GM12878 (cell line): ENCODE measurements at regions of chr16 and their contacts with region 1.

Region 1: GRCh38 chr16:86751076-86752030 is 173.0 kb downstream of the FOXL1 start:
- DNase-seq: no peak
- ATAC-seq: no peak
- H3K4me3 ChIP-seq: no peak overlapping the region
- H3K27ac ChIP-seq: no peak overlapping the region
- H3K4me1 ChIP-seq: no peaks in the 10 kb centered on the region
- H3K27me3 ChIP-seq: no peaks in the 10 kb centered on the region
- CTCF ChIP-seq: no peak
- EP300 ChIP-seq: no peak
- POLR2A ChIP-seq: no peak
- RAD21 ChIP-seq: no peak

Region 2: GRCh38 chr16:86722970-86723369 is 28.4 kb before region 1 on chr16:
- CTCF ChIA-PET with region 1: no interaction called
- POLR2A ChIA-PET with region 1: no interaction called
- RAD21 ChIA-PET with region 1: no interaction called
- SMC1A ChIA-PET with region 1: no interaction called
- in situ Hi-C with region 1: no loop called
- intact Hi-C with region 1: no loop called
- DNase-seq: no peak
- ATAC-seq: no peak
- H3K4me3 ChIP-seq: no peak overlapping the region
- H3K27ac ChIP-seq: no peak overlapping the region
- H3K4me1 ChIP-seq: no peaks in the 10 kb centered on the region
- H3K27me3 ChIP-seq: no peaks in the 10 kb centered on the region
- CTCF ChIP-seq: no peak
- EP300 ChIP-seq: no peak
- POLR2A ChIP-seq: no peak
- RAD21 ChIP-seq: no peak

Region 3: DNA sequence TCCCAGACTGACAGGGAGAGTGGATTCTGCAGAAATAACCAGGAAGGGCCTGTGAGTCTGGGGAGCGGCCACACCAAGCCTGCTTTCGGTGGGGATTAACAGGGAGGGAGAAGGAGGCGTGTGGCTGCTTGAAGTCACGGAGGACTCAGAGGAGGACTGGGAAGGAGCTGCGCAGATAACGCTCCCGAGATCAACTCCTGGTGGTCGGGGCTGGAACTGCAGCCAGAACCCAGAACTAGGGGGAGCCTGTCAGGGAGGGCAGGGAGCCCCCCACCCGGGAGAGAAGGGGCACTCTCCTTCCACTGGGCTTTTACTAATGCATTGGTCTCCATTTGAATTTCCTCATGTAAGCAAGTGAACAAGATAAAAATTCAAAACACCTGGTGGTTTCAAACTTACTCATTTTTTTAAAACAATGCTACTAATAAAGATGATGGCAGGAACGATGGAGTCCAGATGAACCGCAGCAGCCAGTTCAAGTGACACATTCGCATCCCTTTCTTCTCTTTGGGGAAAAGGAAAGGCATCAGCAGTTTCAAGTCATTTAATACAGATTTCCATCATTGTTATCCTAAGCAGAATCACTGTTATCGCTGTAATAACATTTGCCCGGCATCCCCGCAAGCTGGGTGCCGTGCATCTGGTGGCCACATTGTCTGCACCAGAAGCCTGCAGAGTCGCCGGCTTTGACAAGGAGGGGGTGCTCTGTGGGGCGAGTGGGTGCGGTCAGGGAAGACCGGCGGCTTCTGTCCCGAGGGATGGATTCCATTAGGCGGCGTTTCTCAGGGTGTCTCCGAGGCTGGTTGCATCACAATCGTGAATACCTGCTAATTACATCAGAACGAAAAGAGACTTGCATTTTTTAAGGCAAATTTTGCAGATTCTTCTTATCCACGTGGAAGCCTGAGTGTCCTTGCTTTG is 10.0 kb after region 1 on chr16:
- CTCF ChIA-PET with region 1: interaction called, 12 read pairs
- POLR2A ChIA-PET with region 1: no interaction called
- RAD21 ChIA-PET with region 1: no interaction called
- SMC1A ChIA-PET with region 1: interaction called, 7 read pairs
- in situ Hi-C with region 1: no loop called
- intact Hi-C with region 1: no loop called
- DNase-seq: no peak
- ATAC-seq: peak; percentile 82
- H3K4me3 ChIP-seq: no peak overlapping the region
- H3K27ac ChIP-seq: no peak overlapping the region
- H3K4me1 ChIP-seq: no peaks in the 10 kb centered on the region
- H3K27me3 ChIP-seq: 0 out of 4 replicates have a peak, but pooled peaks cover 0 to 2% of the 10 kb centered on the region in 2 experiments
- CTCF ChIP-seq: peak; percentile 46 to 80 (median 67)
- EP300 ChIP-seq: no peak
- POLR2A ChIP-seq: no peak
- RAD21 ChIP-seq: no peak

Region 4: GRCh38 chr16:86809458-86809981 is 58.2 kb after region 1 on chr16:
- CTCF ChIA-PET with region 1: no interaction called
- POLR2A ChIA-PET with region 1: no interaction called
- RAD21 ChIA-PET with region 1: no interaction called
- SMC1A ChIA-PET with region 1: no interaction called
- in situ Hi-C with region 1: no loop called
- intact Hi-C with region 1: no loop called
- DNase-seq: no peak
- ATAC-seq: no peak
- H3K4me3 ChIP-seq: no peak overlapping the region
- H3K27ac ChIP-seq: no peak overlapping the region
- H3K4me1 ChIP-seq: no peaks in the 10 kb centered on the region
- H3K27me3 ChIP-seq: no peaks in the 10 kb centered on the region; a peak in 1 of 4 replicates
- CTCF ChIP-seq: no peak
- EP300 ChIP-seq: no peak
- POLR2A ChIP-seq: no peak
- RAD21 ChIP-seq: no peak

Region 5: DNA sequence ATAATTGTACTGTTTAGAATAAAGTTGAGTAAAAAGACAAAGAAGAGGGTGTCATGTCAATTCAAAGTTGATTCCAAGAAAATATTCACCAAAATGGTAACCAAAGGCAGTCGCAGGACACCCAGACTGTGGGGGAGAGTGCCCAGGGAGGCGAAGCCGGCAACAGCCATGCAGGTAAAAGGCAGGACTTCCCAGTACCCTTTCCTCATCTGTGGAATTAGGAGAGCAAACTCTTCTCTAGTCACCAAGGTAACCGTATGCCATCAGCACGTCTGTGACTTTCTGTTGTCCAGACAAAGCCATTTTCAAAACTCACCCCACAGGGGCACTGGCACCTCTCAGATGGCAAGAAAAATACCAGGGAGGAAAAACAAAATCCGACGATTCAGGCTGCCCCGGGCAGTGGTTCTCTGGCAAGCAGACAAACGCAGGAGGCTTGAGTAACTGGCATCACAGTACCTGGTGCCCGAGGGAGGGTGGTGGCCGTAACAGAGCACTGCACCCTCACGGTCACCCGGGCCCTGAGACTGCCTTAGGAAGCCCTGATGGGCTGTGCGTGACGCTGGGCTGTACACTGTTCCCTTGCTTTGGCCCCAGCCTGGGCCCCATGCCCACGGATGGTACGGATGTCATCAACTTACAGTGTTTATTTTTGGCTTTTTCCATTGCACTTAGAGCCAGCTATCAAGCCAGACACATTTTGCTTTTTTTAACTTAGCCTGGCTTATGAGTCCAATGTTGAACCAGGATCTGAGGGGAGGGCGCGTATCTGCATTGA is 114.4 kb after region 1 on chr16:
- CTCF ChIA-PET with region 1: no interaction called
- POLR2A ChIA-PET with region 1: no interaction called
- RAD21 ChIA-PET with region 1: no interaction called
- SMC1A ChIA-PET with region 1: no interaction called
- in situ Hi-C with region 1: no loop called
- intact Hi-C with region 1: no loop called
- DNase-seq: no peak
- ATAC-seq: no peak
- H3K4me3 ChIP-seq: no peak overlapping the region
- H3K27ac ChIP-seq: no peak overlapping the region
- H3K4me1 ChIP-seq: no peaks in the 10 kb centered on the region
- H3K27me3 ChIP-seq: no peaks in the 10 kb centered on the region
- CTCF ChIP-seq: no peak
- EP300 ChIP-seq: no peak
- POLR2A ChIP-seq: no peak
- RAD21 ChIP-seq: no peak